Transverse colon (tissue), 4 donors: ENCODE measurements at regions of chr4 and their contacts with region 1.

Region 1: DNA sequence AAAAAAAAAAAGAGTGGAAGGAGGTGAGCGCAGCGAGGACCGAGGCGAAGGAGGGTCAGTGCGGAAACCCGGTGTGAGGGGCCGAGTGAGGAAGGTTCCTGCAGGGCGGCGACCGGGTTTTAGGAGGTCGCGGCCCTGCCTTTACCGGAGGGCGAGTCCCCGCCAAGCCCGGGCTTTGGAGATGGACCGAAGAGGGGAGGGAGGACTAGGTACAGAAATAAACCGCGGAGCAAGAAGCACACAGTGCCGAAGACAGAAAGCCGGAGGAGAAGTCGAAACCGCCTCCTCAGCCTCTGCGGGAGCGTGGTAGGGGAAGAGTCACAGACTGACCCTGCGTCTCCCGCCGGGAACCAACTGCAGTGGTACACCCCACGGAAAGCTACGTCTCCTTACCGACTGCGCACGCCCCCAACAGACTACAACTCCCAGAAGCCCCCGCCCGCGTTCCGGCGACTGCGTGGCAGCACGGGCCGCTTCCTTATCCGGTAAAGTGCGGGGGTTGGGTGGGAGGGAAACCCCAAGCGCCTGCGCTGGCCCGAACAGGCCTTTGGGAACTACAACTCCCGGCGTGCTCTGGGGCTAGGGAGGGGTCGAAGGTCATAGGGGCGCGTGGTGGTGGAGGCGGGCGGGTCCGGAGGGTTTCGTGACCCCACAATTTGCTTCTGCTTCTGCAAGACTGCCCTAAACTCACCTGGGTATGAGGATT is at the start of gene NFXL1:
- DNase-seq: peak; percentile 98
- H3K4me3 ChIP-seq: peak within 1 kb of the TSS; percentile 79 to 93 (median 90)
- H3K27ac ChIP-seq: peak within 1 kb of the TSS; percentile 84 to 94 (median 90)
- H3K4me1 ChIP-seq: peaks cover 0 to 21% (median 9%) of the 10 kb centered on the region in 4 donors
- H3K27me3 ChIP-seq: no peaks in the 10 kb centered on the region
- CTCF ChIP-seq: no peak
- EP300 ChIP-seq: no peak
- POLR2A ChIP-seq: peak; percentile 87
- total RNA-seq, gene NFXL1: 2.0 to 22.4 (median 9.3) TPM

Region 2: GRCh38 chr4:47263721-47264120 is 650.7 kb before region 1 on chr4:
- in situ Hi-C with region 1: no loop called
- intact Hi-C with region 1: no loop called
- DNase-seq: no peak
- H3K4me3 ChIP-seq: no peak overlapping the region
- H3K27ac ChIP-seq: no peak overlapping the region
- H3K4me1 ChIP-seq: no peaks in the 10 kb centered on the region
- H3K27me3 ChIP-seq: no peaks in the 10 kb centered on the region
- CTCF ChIP-seq: no peak
- EP300 ChIP-seq: no peak
- POLR2A ChIP-seq: no peak

Region 3: GRCh38 chr4:47463235-47463956 is 451.0 kb before region 1 on chr4 and contains the start of gene COMMD8:
- in situ Hi-C with region 1: loop called in 1 of 4 experiments (anchors 25 kb)
- intact Hi-C with region 1: no loop called
- DNase-seq: peak; percentile 98
- H3K4me3 ChIP-seq: peak within 1 kb of the TSS; percentile 84 to 96 (median 86)
- H3K27ac ChIP-seq: peak within 1 kb of the TSS; percentile 87 to 93 (median 90)
- H3K4me1 ChIP-seq: peaks cover 6 to 10% (median 8%) of the 10 kb centered on the region in 4 donors
- H3K27me3 ChIP-seq: no peaks in the 10 kb centered on the region
- CTCF ChIP-seq: peak in 4 of 5 experiments; percentile 29 to 68 (median 44)
- EP300 ChIP-seq: no peak
- POLR2A ChIP-seq: peak; percentile 70
- total RNA-seq, gene COMMD8: 0.80 to 20.2 (median 8.2) TPM

Region 4: DNA sequence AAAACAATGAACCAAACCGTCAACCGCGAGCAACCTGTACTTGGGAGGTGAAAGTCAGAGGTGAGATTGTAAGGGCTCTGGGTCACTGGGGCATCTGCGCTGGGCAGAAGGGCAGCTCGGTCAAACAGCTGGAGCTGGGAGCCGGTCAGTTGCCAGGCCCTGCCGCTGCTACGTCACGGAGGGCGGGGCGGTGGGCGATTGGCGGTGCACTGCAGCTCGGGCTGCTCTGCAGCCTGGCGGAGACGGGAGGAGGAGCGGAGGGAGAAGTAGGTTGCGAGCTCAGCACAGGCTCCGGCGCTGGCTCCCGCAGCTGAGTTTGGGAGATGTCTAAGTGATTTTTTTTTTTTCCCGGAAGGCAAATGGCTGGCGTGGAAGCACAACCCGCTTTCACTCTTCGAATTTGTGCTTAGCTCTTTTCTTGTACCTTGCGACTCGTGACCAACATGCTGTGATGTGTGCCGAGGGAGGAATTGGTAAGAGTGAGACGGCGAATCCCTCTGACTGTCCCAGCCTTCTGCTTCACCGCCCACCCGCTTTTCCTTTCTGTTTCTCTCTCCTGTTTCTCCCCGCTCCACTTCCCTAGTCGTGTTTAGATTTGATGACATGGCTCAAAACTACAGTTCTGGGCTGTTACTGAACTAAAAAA is 429.2 kb before region 1 on chr4 and contains the start of gene ATP10D:
- in situ Hi-C with region 1: loop called in 1 of 4 experiments (anchors 25 kb)
- intact Hi-C with region 1: no loop called
- DNase-seq: peak; percentile 97
- H3K4me3 ChIP-seq: peak within 1 kb of the TSS; percentile 51 to 74 (median 62)
- H3K27ac ChIP-seq: peak within 1 kb of the TSS; percentile 92 to 94 (median 93)
- H3K4me1 ChIP-seq: peaks cover 0 to 23% (median 11%) of the 10 kb centered on the region in 4 donors
- H3K27me3 ChIP-seq: no peaks in the 10 kb centered on the region
- CTCF ChIP-seq: peak in 2 of 5 experiments; percentile 29 to 43
- EP300 ChIP-seq: no peak
- POLR2A ChIP-seq: peak; percentile 87
- total RNA-seq, gene ATP10D: 3.8 to 14.1 (median 7.7) TPM

Region 5: GRCh38 chr4:48173056-48173991 is 259.0 kb after region 1 on chr4:
- in situ Hi-C with region 1: no loop called
- intact Hi-C with region 1: no loop called
- DNase-seq: no peak
- H3K4me3 ChIP-seq: no peak overlapping the region
- H3K27ac ChIP-seq: no peak overlapping the region
- H3K4me1 ChIP-seq: peaks cover 0 to 6% (median 0%) of the 10 kb centered on the region in 4 donors
- H3K27me3 ChIP-seq: no peaks in the 10 kb centered on the region
- CTCF ChIP-seq: no peak
- EP300 ChIP-seq: no peak
- POLR2A ChIP-seq: no peak